Activated CD8-positive, alpha-beta T cell treated with anti-CD3 and anti-CD28 coated beads for 36 hours (primary cell): ENCODE measurements at regions of chrX and their contacts with region 1.

Region 1: GRCh38 chrX:132022967-132023895 is at the start of gene STK26:
- DNase-seq: peak; percentile 82
- ATAC-seq: peak; percentile 80
- H3K4me3 Mint-ChIP-seq: peak within 1 kb of the TSS; percentile 93
- H3K27ac Mint-ChIP-seq: peak within 1 kb of the TSS; percentile 96
- H3K4me1 Mint-ChIP-seq: peaks cover 29% of the 10 kb centered on the region
- H3K27me3 Mint-ChIP-seq: no peaks in the 10 kb centered on the region
- CTCF ChIP-seq: no peak
- total RNA-seq, gene STK26: 75.4 to 79.9 TPM

Region 2: GRCh38 chrX:131970347-131970746 is 52.9 kb before region 1 on chrX:
- CTCF ChIA-PET with region 1: no interaction called
- POLR2A ChIA-PET with region 1: no interaction called
- intact Hi-C with region 1: no loop called
- DNase-seq: no peak
- ATAC-seq: no peak
- H3K4me3 Mint-ChIP-seq: peak overlapping the region; percentile 31
- H3K27ac Mint-ChIP-seq: peak overlapping the region; percentile 83
- H3K4me1 Mint-ChIP-seq: peaks cover 7% of the 10 kb centered on the region
- H3K27me3 Mint-ChIP-seq: no peaks in the 10 kb centered on the region
- CTCF ChIP-seq: no peak

Region 3: GRCh38 chrX:131987252-131987651 is 36.0 kb before region 1 on chrX:
- CTCF ChIA-PET with region 1: no interaction called
- POLR2A ChIA-PET with region 1: interaction called, 5 read pairs
- intact Hi-C with region 1: loop called (anchors 5 kb)
- DNase-seq: peak; percentile 31
- ATAC-seq: peak; percentile 88
- H3K4me3 Mint-ChIP-seq: peak overlapping the region; percentile 63
- H3K27ac Mint-ChIP-seq: peak overlapping the region; percentile 97
- H3K4me1 Mint-ChIP-seq: peaks cover 50% of the 10 kb centered on the region
- H3K27me3 Mint-ChIP-seq: no peaks in the 10 kb centered on the region
- CTCF ChIP-seq: no peak

Region 4: GRCh38 chrX:132488819-132489577 is 465.8 kb after region 1 on chrX and contains the start of gene MBNL3:
- CTCF ChIA-PET with region 1: no interaction called
- POLR2A ChIA-PET with region 1: no interaction called
- intact Hi-C with region 1: loop called (anchors 10 kb)
- DNase-seq: peak; percentile 69
- ATAC-seq: peak; percentile 68
- H3K4me3 Mint-ChIP-seq: peak within 1 kb of the TSS; percentile 88
- H3K27ac Mint-ChIP-seq: peak within 1 kb of the TSS; percentile 98
- H3K4me1 Mint-ChIP-seq: peaks cover 43% of the 10 kb centered on the region
- H3K27me3 Mint-ChIP-seq: no peaks in the 10 kb centered on the region
- CTCF ChIP-seq: no peak
- total RNA-seq, gene MBNL3: 19.8 to 23.3 TPM